IMR-90 (cell line): ENCODE measurements at regions of chr5 and their contacts with region 1.

Region 1: DNA sequence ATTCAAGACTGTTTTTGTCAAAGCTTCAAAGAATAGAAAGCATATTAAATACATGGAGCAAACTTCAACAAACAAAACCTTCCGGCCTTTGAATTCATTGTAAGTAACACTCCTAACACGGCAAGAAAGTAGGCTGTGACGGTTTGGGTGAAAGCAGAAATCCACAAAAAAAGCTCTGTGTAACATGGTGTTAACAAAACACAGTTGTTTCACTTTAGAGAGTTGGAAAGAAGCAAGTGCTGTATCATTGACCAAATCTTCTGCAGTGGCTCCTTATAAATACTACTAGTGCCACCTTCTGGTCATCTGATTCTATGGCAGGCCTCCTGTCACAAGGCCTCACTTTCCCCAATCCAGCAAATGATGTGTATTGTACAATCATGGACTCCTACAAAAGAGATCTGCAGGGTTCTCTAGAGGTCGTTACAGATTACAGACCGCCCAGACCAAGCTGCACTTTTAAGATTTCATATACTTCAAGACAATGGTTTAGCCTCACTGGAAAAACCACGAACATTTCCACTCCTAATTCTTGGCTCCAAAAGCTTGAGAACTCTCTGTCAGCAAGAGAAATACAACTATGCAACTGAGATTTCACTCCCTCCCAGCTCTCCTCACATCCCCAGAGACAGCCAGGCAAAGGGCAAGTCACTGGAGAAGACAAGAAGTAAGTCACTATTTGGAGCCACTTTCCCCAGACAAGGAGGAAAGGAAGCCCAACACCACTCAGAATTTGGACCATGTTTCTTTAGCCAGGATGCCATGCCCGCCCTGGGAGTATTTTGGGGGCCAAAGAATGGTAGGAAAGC is 196.2 kb downstream of the DTWD2 start:
- DNase-seq: peak; percentile 75
- ATAC-seq: peak; percentile 97
- H3K4me3 ChIP-seq: peak overlapping the region; percentile 54; the same call in 1 of the 2 replicates
- H3K27ac ChIP-seq: no peak overlapping the region
- H3K4me1 ChIP-seq: no peaks in the 10 kb centered on the region
- H3K27me3 ChIP-seq: no peaks in the 10 kb centered on the region
- CTCF ChIP-seq: peak; percentile 81
- POLR2A ChIP-seq: no peak
- RAD21 ChIP-seq: peak; percentile 76

Region 2: DNA sequence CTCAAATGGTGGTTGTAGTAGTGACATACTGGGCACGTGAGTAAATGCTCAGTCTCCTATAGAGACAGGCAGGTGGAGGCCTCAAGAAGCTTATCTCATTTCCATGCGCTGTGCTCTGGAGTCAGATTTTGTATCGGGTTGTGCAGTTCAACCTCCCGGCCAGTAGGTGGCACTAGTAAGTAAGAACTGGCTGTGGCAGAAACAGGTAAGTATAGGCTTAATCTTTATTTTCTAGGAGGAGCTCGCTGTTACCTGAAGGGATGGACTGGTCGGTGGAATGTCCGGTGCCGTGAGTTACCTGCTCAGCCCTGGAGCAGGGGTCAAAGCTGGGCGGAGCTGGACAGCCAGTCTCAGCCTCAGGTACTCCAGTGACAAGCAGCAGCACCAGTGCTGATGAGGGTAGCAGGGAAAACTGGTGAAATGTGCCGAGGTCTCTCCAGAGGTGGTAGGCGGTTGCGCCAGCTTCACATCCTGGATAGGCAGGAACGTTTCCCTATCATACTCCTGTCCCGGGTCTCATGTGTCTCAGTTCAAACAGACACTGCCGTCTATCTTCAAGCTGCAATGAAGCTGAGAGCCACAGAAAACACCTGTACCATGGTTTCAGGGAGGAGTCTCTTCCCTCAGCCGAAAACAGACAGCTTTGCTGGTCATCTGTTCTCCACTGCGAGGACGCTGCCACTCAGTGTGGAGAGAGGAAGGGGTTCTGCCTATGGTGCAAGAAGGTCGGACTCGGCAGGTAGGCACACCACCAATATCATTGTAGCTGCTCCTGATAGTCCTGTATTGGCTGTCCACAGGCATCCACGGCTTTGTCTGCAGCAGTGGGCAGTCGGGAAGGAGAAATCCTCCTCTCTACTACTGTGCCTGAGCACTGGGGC is 1337.2 kb before region 1 on chr5:
- CTCF ChIA-PET with region 1: no interaction called
- POLR2A ChIA-PET with region 1: no interaction called
- dilution Hi-C with region 1: no loop called
- in situ Hi-C with region 1: loop called (anchors 25 kb)
- intact Hi-C with region 1: no loop called
- DNase-seq: peak; percentile 6
- ATAC-seq: peak; percentile 53
- H3K4me3 ChIP-seq: no peak overlapping the region
- H3K27ac ChIP-seq: no peak overlapping the region
- H3K4me1 ChIP-seq: no peaks in the 10 kb centered on the region
- H3K27me3 ChIP-seq: no peaks in the 10 kb centered on the region
- CTCF ChIP-seq: peak; percentile 52
- POLR2A ChIP-seq: no peak
- RAD21 ChIP-seq: peak; percentile 60

Region 3: DNA sequence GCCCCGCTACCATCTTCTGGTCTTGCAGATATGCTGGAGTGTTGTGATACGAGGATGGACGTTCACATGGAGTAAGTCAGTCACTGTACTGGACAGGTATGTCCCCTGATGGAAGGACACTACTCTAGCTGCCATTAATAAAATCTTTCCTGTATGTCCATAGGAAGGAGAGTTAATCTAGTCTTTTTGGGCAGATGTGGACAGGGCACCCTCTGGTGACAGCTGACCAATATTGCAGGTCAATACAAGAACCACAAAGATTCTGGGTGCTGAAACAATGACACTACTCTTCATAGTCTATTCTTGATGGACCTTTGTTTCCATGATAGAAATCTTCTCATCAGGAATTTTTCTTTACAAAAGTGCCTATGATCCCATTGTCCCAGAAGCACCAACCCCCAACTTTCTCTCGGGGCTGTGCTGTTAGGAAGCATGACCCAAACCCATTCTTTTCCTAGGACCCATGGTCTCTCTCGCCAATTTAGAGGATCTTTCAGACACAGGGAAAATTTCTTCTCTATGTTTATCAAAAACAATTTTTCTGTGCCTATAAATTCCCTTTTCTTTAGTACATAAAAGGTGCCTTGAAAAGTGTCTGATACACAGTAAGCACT is 180.7 kb before region 1 on chr5:
- CTCF ChIA-PET with region 1: interaction called, 6 read pairs
- POLR2A ChIA-PET with region 1: no interaction called
- dilution Hi-C with region 1: no loop called
- in situ Hi-C with region 1: no loop called
- intact Hi-C with region 1: loop called (anchors 2 kb)
- DNase-seq: peak; percentile 17
- ATAC-seq: peak; percentile 73
- H3K4me3 ChIP-seq: no peak overlapping the region
- H3K27ac ChIP-seq: no peak overlapping the region
- H3K4me1 ChIP-seq: no peaks in the 10 kb centered on the region
- H3K27me3 ChIP-seq: no peaks in the 10 kb centered on the region
- CTCF ChIP-seq: peak; percentile 56
- POLR2A ChIP-seq: no peak
- RAD21 ChIP-seq: peak; percentile 70

Region 4: GRCh38 chr5:118723021-118723338 is 69.2 kb before region 1 on chr5:
- CTCF ChIA-PET with region 1: no interaction called
- POLR2A ChIA-PET with region 1: no interaction called
- dilution Hi-C with region 1: no loop called
- in situ Hi-C with region 1: no loop called
- intact Hi-C with region 1: no loop called
- DNase-seq: no peak
- ATAC-seq: no peak
- H3K4me3 ChIP-seq: no peak overlapping the region
- H3K27ac ChIP-seq: no peak overlapping the region
- H3K4me1 ChIP-seq: no peaks in the 10 kb centered on the region
- H3K27me3 ChIP-seq: no peaks in the 10 kb centered on the region
- CTCF ChIP-seq: no peak
- POLR2A ChIP-seq: no peak
- RAD21 ChIP-seq: no peak

Region 5: DNA sequence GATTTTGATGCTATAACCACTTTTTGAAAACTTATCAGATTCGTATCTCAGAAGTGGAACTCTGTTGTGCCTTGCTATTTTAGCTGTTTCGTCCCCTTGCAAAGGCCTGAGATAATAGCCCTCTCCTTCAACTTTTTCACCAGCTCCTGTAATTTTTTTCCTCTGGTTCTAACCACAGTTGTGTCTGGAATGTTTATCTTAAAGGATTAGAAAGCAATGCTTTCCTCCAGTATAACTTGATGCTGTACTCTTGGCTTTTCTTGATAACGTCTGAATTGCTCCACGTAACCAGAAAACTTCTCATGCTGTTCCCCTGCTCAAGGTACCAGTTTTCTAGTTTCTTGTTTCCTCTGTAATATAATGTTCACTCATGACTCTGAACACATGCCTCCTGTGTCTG is 13.2 kb before region 1 on chr5:
- CTCF ChIA-PET with region 1: interaction called, 12 read pairs
- POLR2A ChIA-PET with region 1: no interaction called
- dilution Hi-C with region 1: no loop called
- in situ Hi-C with region 1: no loop called
- intact Hi-C with region 1: no loop called
- DNase-seq: no peak
- ATAC-seq: no peak
- H3K4me3 ChIP-seq: no peak overlapping the region
- H3K27ac ChIP-seq: no peak overlapping the region
- H3K4me1 ChIP-seq: no peaks in the 10 kb centered on the region
- H3K27me3 ChIP-seq: no peaks in the 10 kb centered on the region
- CTCF ChIP-seq: no peak
- POLR2A ChIP-seq: no peak
- RAD21 ChIP-seq: no peak

Region 6: GRCh38 chr5:118808441-118808840 is 16.3 kb after region 1 on chr5:
- CTCF ChIA-PET with region 1: interaction called, 10 read pairs
- POLR2A ChIA-PET with region 1: no interaction called
- dilution Hi-C with region 1: no loop called
- in situ Hi-C with region 1: no loop called
- intact Hi-C with region 1: no loop called
- DNase-seq: no peak
- ATAC-seq: no peak
- H3K4me3 ChIP-seq: no peak overlapping the region
- H3K27ac ChIP-seq: no peak overlapping the region
- H3K4me1 ChIP-seq: no peaks in the 10 kb centered on the region
- H3K27me3 ChIP-seq: no peaks in the 10 kb centered on the region
- CTCF ChIP-seq: no peak
- POLR2A ChIP-seq: no peak
- RAD21 ChIP-seq: no peak

Region 7: DNA sequence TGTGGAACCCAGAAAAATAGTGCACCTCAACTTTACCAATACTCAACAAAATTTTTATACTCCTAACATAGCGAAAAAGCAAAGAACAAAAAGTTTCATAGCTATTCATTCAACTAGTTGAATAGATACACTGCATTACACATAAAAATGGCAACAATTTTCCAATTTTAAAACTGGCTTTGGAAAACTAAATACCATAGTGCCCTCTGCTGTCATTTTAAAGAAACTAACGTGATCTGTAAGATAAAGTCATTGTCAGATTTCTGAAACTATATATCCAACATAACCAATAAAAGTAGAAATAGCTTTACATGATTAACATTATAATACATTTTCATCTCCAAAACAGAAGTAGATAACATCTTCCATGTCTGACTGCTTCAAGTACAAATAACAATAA is 164.6 kb after region 1 on chr5:
- CTCF ChIA-PET with region 1: interaction called, 5 read pairs
- POLR2A ChIA-PET with region 1: no interaction called
- dilution Hi-C with region 1: no loop called
- in situ Hi-C with region 1: no loop called
- intact Hi-C with region 1: loop called (anchors 5 kb)
- DNase-seq: peak; percentile 22
- ATAC-seq: peak; percentile 60
- H3K4me3 ChIP-seq: no peak overlapping the region
- H3K27ac ChIP-seq: no peak overlapping the region
- H3K4me1 ChIP-seq: no peaks in the 10 kb centered on the region
- H3K27me3 ChIP-seq: no peaks in the 10 kb centered on the region
- CTCF ChIP-seq: peak; percentile 51
- POLR2A ChIP-seq: no peak
- RAD21 ChIP-seq: peak; percentile 62